HCT116 (cell line): ENCODE measurements at regions of chr2 and their contacts with region 1.

Region 1: DNA sequence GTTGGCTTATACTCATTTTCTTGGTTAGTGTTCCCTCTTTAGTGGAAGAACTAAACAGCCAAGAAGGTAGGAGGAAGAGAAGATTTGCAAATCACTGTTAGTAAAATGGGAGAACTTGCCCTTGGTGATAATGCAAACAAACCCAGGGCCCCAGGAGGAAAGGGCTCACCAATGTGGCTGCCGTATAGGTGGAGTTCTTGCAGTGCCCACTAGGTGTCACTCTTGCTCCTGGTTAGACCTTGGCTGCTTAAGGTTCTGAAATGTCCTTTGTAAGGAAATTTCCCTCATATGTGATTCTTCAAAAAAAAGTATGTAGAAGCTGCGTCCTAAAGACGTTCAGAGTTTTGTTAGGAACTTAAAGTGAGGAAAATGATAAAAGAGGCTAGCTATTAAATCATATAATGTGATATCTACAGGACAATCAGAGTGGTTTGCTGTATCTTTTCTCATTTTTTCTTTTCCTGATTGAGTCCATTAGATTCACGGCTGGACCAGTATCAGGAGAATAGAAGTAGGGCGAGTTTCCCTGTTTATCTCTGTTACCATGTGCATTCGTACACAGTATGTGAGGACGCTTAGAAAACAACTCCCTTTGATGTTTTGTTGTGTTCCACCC is 48.6 kb downstream of the RPIA start:
- DNase-seq: peak; percentile 46
- ATAC-seq: peak; percentile 81
- H3K4me3 ChIP-seq: no peak overlapping the region
- H3K27ac ChIP-seq: no peak overlapping the region
- H3K4me1 ChIP-seq: peaks cover 14 to 17% of the 10 kb centered on the region in 2 experiments
- H3K27me3 ChIP-seq: no peaks in the 10 kb centered on the region
- CTCF ChIP-seq: peak; percentile 50 to 94 (median 93); a peak in 5 of 6 replicates
- POLR2A ChIP-seq: no peak
- RAD21 ChIP-seq: peak; percentile 78

Region 2: DNA sequence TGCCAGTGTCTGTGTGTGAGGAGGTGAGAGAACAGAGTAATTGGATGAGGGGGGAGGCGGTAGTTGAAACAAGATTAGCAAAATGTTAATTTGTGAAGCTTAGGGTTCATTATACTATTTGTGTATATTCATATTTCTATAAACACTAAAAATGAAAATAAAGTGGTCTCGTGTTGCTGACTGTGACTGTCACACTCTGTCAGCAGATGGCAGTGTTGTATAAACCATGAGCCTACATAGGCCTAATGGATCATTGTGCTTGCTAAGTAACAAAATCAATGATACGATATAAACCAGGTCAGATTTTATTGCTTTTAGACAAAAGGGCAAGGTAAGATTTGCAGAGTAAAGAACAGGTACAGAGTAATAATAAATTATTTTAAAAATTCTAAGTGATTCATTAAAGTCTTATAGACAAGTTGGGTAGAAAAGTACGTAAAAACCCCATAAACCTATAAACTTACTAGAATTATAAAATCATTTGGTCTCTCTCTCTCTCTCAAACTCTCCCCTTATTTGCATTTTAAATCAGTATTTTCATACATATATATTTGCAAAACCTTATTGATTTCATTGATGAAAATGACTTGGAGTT is 134.1 kb after region 1 on chr2:
- CTCF ChIA-PET with region 1: no interaction called
- POLR2A ChIA-PET with region 1: no interaction called
- RAD21 ChIA-PET with region 1: no interaction called
- intact Hi-C with region 1: loop called (anchors 5 kb)
- DNase-seq: peak; percentile 48
- ATAC-seq: peak; percentile 87
- H3K4me3 ChIP-seq: no peak overlapping the region
- H3K27ac ChIP-seq: no peak overlapping the region
- H3K4me1 ChIP-seq: no peaks in the 10 kb centered on the region
- H3K27me3 ChIP-seq: peaks cover 37% of the 10 kb centered on the region
- CTCF ChIP-seq: peak; percentile 61 to 85 (median 66)
- POLR2A ChIP-seq: no peak
- RAD21 ChIP-seq: peak; percentile 80